ENCODE measurements at regions of chr11 and their contacts with region 1.

Region 1: DNA sequence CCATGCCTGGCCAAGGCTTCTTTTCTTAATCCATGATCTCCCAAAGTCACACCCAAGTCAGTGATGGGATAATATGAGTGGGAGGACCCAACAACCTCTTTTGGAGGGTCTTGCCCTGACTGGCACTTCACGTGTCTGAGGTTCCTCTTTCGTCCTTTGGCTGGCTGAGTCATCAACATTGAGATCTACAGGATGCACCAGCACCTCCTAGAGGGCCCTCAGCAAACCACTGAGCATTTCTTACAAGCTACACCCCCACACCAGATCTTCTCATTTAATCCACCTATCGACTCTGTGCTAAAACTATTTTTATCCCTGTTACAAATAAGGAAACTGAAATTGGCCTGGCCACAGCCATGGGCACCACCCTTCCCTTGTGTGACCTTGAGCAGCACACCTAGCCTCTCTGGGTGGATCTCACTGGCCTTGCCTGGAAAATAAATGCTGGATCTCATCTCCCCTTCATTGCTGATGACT is 63.4 kb downstream of the FLI1 start:
- DNase-seq: peak; percentile 41
- ATAC-seq: peak; percentile 79
- H3K4me3 Mint-ChIP-seq: peak overlapping the region; percentile 66
- H3K27ac Mint-ChIP-seq: peak overlapping the region; percentile 91
- H3K4me1 Mint-ChIP-seq: peaks cover 80% of the 10 kb centered on the region
- H3K27me3 Mint-ChIP-seq: no peaks in the 10 kb centered on the region
- CTCF ChIP-seq: peak; percentile 81

Region 2: GRCh38 chr11:128172046-128172878 is 585.0 kb before region 1 on chr11:
- CTCF ChIA-PET with region 1: interaction called, 25 read pairs
- POLR2A ChIA-PET with region 1: interaction called, 4 read pairs
- intact Hi-C with region 1: loop called (anchors 1 kb)
- DNase-seq: peak; percentile 65
- ATAC-seq: peak; percentile 79
- H3K4me3 Mint-ChIP-seq: no peak overlapping the region
- H3K27ac Mint-ChIP-seq: no peak overlapping the region
- H3K4me1 Mint-ChIP-seq: peaks cover 5% of the 10 kb centered on the region
- H3K27me3 Mint-ChIP-seq: no peaks in the 10 kb centered on the region
- CTCF ChIP-seq: no peak

Region 3: GRCh38 chr11:128290106-128290840 is 467.0 kb before region 1 on chr11:
- CTCF ChIA-PET with region 1: interaction called, 18 read pairs
- POLR2A ChIA-PET with region 1: interaction called, 16 read pairs
- intact Hi-C with region 1: loop called (anchors 1 kb)
- DNase-seq: peak; percentile 67
- ATAC-seq: peak; percentile 75
- H3K4me3 Mint-ChIP-seq: peak overlapping the region; percentile 85
- H3K27ac Mint-ChIP-seq: peak overlapping the region; percentile 99
- H3K4me1 Mint-ChIP-seq: peaks cover 97% of the 10 kb centered on the region
- H3K27me3 Mint-ChIP-seq: no peaks in the 10 kb centered on the region
- CTCF ChIP-seq: no peak

Region 4: DNA sequence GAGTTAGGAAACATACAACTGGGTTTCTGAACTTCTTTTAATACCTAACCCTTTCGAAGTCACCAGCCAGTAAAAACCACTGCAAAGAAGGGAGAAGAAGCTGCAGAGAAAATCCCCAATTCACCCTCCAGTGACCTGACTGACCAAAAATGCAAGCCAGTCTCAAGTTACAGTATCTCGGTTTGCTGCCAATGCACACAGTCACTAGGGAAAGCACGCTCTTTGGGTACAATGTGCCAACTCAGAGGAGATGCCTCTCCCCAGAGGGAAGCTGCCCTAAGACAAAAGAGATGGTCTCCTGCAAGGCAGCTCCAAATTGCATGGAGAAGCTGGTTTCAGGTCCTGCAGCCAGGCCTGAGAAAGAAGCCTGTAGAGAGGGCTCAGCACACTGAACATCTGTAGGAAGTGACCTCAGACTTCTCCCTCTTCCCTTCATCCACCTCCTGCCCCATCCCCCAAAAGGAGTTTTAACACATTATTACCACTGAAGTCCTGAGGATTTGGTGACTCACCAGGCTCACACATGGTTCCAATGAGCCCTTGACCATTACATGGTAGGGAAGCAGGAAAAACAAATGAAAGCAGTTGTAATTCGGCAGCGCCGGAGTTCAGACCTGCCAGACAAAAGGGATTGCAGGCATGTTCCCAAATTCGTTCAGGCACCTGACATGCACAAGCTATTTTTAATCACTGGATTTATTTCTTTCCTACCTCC is 260.1 kb before region 1 on chr11:
- CTCF ChIA-PET with region 1: interaction called, 6 read pairs
- POLR2A ChIA-PET with region 1: no interaction called
- intact Hi-C with region 1: loop called (anchors 1 kb)
- DNase-seq: peak; percentile 43
- ATAC-seq: peak; percentile 92
- H3K4me3 Mint-ChIP-seq: peak overlapping the region; percentile 78
- H3K27ac Mint-ChIP-seq: peak overlapping the region; percentile 93
- H3K4me1 Mint-ChIP-seq: peaks cover 98% of the 10 kb centered on the region
- H3K27me3 Mint-ChIP-seq: no peaks in the 10 kb centered on the region
- CTCF ChIP-seq: no peak

Region 5: GRCh38 chr11:128610721-128611617 is 146.3 kb before region 1 on chr11:
- CTCF ChIA-PET with region 1: interaction called, 25 read pairs
- POLR2A ChIA-PET with region 1: interaction called, 17 read pairs
- intact Hi-C with region 1: loop called (anchors 2 kb)
- DNase-seq: peak; percentile 79
- ATAC-seq: peak; percentile 87
- H3K4me3 Mint-ChIP-seq: peak overlapping the region; percentile 79
- H3K27ac Mint-ChIP-seq: peak overlapping the region; percentile 94
- H3K4me1 Mint-ChIP-seq: peaks cover 93% of the 10 kb centered on the region
- H3K27me3 Mint-ChIP-seq: no peaks in the 10 kb centered on the region
- CTCF ChIP-seq: no peak

Region 6: DNA sequence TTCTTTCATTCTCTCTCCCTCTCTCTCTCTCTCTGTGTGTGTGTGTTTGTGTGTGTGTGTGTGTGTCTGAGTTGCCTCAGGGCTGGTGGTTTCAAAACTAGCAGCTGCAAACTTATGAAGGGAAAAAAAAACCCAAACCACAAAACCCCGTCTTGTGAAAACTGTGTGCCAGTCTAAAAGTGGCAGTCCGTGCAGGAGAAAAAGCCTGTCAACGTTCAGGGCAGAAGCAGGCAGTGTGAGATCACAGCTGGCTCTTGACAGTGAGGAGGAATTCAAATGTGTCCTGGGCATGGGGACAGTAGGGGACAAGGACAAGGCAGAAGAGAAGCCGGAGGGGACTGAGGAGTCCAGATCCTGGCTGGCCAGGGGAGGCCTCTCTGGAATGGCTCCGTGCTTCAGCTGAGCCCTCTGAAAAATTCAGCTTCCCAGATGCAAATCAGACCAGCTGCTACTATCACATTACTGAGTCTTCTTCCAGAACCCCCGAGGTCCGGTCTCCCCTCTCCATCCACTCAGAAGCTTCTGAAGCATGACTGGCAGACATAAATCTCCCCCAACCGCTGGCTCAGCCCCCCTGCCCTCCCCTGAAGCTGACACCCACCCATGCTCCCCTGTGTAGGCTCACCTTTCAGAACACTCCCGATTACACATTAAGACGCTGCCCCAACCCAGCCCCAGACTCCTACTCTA is 31.5 kb before region 1 on chr11:
- CTCF ChIA-PET with region 1: interaction called, 5 read pairs
- POLR2A ChIA-PET with region 1: interaction called, 31 read pairs
- intact Hi-C with region 1: loop called (anchors 1 kb)
- DNase-seq: peak; percentile 42
- ATAC-seq: peak; percentile 64
- H3K4me3 Mint-ChIP-seq: peak overlapping the region; percentile 83
- H3K27ac Mint-ChIP-seq: peak overlapping the region; percentile 98
- H3K4me1 Mint-ChIP-seq: peaks cover 98% of the 10 kb centered on the region
- H3K27me3 Mint-ChIP-seq: no peaks in the 10 kb centered on the region
- CTCF ChIP-seq: no peak

Region 7: DNA sequence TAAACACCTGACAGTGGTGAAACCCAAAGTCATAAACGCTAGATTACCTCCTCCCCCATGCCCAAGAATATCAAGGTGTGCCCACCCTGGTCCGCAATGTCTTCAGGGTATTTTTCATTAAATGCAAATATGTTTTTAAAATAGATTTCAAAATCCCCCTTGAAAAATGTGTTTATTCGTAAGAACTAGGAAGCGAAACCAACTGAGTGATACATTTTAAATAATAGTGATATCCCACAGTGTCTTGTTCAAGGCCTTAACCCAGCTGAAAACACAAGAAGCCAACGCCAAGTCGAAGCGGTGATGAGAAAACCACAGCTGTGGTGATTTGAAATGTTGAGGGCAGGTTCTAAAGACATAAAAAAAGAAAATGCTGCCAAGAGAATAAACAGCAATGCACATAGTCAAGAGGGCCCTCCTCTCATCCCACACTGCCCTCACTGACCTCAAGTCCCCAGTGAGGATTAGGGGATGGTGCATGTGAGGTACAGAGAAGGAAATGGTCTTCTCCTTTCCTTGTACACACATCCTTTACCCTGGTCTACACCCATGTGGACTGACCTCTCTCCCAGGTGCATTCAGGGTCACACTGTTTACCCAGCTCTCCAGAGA is 84.3 kb after region 1 on chr11:
- CTCF ChIA-PET with region 1: interaction called, 6 read pairs
- POLR2A ChIA-PET with region 1: interaction called, 11 read pairs
- intact Hi-C with region 1: no loop called
- DNase-seq: no peak
- ATAC-seq: peak; percentile 77
- H3K4me3 Mint-ChIP-seq: peak overlapping the region; percentile 36
- H3K27ac Mint-ChIP-seq: peak overlapping the region; percentile 86
- H3K4me1 Mint-ChIP-seq: peaks cover 100% of the 10 kb centered on the region
- H3K27me3 Mint-ChIP-seq: no peaks in the 10 kb centered on the region
- CTCF ChIP-seq: no peak